Activated naive CD4-positive, alpha-beta T cell treated with anti-CD3 and anti-CD28 coated beads for 36 hours (primary cell): ENCODE measurements at regions of chr9 and their contacts with region 1.

Region 1: DNA sequence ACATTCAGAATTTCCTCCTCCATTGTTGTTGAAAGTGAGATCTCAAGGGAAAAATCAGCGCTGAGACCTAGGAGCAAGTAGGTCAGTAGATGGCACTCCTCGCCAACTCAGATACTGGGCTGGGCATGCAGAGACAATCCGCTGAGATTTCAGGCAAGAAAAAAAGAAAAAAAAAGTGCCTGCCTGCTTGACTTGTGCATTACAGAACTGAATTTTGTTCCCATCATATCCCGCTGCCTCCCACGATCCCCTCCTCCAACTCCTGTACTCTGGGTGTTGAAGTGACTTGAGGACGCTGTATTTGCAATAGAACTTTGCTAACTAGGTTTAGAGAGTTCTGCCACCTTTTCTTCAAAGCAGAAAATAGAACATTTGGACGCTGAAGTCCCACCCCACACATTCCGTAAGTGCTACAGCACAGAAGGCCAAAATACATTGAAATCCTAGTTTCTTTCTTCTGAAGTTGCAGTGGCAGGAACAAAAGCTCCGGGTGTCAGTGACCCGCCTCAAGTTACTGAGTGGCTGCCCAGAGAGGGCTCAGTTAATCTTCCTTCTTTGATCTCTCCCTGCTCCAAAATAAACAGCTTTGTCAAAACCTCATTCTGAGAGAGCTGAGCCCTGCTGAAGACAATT is 265.8 kb downstream of the MLLT3 start:
- DNase-seq: peak; percentile 85
- H3K4me3 Mint-ChIP-seq: no peak overlapping the region
- H3K27ac Mint-ChIP-seq: peak overlapping the region; percentile 46
- H3K4me1 Mint-ChIP-seq: peaks cover 72% of the 10 kb centered on the region
- H3K27me3 Mint-ChIP-seq: no peaks in the 10 kb centered on the region

Region 2: GRCh38 chr9:19925817-19926503 is 430.6 kb before region 1 on chr9:
- CTCF ChIA-PET with region 1: interaction called, 6 read pairs
- intact Hi-C with region 1: loop called (anchors 1 kb)
- DNase-seq: peak; percentile 90
- H3K4me3 Mint-ChIP-seq: peak overlapping the region; percentile 57
- H3K27ac Mint-ChIP-seq: no peak overlapping the region
- H3K4me1 Mint-ChIP-seq: peaks cover 18% of the 10 kb centered on the region
- H3K27me3 Mint-ChIP-seq: peaks cover 2% of the 10 kb centered on the region

Region 3: DNA sequence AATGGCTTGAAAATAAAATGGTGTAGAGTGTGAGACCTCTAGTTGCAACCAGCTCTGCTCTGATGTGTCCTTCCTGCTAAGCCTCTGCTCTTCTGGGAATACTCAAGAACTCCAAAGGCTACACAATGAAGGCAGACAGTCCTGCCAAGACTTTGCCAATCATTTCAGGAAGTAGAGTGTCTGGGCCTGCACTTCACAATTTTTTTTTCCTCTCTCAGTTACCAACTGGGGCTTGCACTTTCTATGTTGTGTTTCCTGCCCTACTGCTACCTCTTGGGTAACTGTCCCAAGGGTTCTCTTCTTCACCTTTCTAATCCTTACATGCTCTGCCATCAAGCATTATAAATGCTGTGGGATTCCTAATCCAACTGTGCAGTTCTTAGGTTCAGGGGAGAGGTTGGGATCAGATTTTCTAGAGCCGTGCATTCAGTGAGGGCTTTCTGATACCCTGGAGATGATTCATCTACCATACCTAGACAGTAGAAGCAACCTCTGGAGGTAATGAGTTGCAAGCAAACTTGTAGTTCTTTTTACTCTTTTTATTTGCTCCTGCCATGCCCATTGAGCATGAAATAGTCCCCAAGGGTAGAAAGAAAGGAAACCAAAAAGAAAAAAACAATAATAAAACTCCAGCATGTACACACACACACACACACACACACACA is 100.1 kb before region 1 on chr9:
- CTCF ChIA-PET with region 1: interaction called, 7 read pairs
- intact Hi-C with region 1: loop called (anchors 2 kb)
- DNase-seq: no peak
- H3K4me3 Mint-ChIP-seq: no peak overlapping the region
- H3K27ac Mint-ChIP-seq: no peak overlapping the region
- H3K4me1 Mint-ChIP-seq: peaks cover 38% of the 10 kb centered on the region
- H3K27me3 Mint-ChIP-seq: no peaks in the 10 kb centered on the region

Region 4: GRCh38 chr9:20289423-20290010 is 67.0 kb before region 1 on chr9:
- CTCF ChIA-PET with region 1: no interaction called
- intact Hi-C with region 1: no loop called
- DNase-seq: no peak
- H3K4me3 Mint-ChIP-seq: no peak overlapping the region
- H3K27ac Mint-ChIP-seq: no peak overlapping the region
- H3K4me1 Mint-ChIP-seq: peaks cover 27% of the 10 kb centered on the region
- H3K27me3 Mint-ChIP-seq: no peaks in the 10 kb centered on the region

Region 5: DNA sequence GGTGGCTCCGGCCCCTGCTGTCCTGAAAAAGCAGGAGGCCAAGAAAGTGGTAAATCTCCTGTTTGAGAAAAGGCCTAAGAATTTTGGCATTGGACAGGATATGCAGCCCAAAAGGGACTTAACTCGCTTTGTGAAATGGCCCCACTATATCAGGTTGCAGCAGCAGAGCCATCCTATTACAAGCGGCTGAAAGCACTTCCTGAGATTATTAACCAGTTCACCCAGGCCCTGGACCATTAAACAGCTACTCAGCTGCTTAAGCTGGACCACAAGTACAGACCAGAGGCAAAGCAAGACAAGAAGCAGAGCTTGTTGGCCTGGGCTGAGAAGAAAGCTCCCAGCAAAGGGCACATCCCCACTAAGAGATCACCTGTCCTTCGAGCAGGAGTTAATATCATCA is 176.1 kb after region 1 on chr9:
- CTCF ChIA-PET with region 1: no interaction called
- intact Hi-C with region 1: no loop called
- DNase-seq: no peak
- H3K4me3 Mint-ChIP-seq: no peak overlapping the region
- H3K27ac Mint-ChIP-seq: no peak overlapping the region
- H3K4me1 Mint-ChIP-seq: peaks cover 68% of the 10 kb centered on the region
- H3K27me3 Mint-ChIP-seq: no peaks in the 10 kb centered on the region

Region 6: GRCh38 chr9:20684035-20684872 is 327.7 kb after region 1 on chr9 and contains the start of gene FOCAD:
- CTCF ChIA-PET with region 1: interaction called, 3 read pairs
- intact Hi-C with region 1: loop called (anchors 1 kb)
- DNase-seq: peak; percentile 95
- H3K4me3 Mint-ChIP-seq: peak within 1 kb of the TSS; percentile 88
- H3K27ac Mint-ChIP-seq: peak within 1 kb of the TSS; percentile 76
- H3K4me1 Mint-ChIP-seq: peaks cover 17% of the 10 kb centered on the region
- H3K27me3 Mint-ChIP-seq: no peaks in the 10 kb centered on the region
- total RNA-seq, gene FOCAD: 31.7 to 32.2 TPM

Region 7: DNA sequence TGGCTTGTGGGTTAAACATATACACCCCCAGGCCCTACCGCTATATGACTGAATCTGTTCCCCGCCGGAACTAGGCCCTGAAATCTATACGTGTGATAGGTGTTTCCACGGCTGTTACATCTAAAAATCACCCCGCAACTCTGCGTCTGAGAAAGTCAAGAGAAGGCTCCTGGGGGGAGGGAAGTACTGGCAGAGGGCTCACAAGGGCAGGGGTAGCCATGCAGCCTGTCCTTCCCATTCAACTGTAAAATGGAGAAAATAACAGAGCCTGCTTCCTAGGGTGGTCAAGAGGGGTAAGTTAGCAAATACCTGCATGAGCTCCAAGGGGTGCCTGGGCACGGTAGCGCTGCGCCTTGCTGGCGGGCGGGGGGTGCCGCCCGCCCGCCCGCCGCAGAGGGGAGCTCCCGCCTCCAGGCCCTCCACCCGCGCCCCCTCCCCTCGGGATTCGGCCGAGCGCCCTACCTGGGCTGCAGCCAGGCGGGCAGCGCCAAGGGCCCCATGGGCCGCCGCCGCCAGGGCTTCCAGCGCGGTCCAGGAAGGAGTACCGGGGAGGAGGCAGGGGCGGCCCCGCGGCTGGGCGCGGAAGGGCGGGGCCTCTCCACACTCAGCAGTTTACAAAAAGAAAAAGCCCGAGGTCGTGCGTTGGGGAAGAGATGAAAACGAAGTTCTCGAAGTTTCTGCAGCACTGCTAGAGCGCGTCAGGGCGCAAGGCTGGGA is 674.7 kb after region 1 on chr9 and contains the start of gene HACD4:
- CTCF ChIA-PET with region 1: no interaction called
- intact Hi-C with region 1: loop called (anchors 2 kb)
- DNase-seq: peak; percentile 78
- H3K4me3 Mint-ChIP-seq: peak within 1 kb of the TSS; percentile 49
- H3K27ac Mint-ChIP-seq: peak within 1 kb of the TSS; percentile 69
- H3K4me1 Mint-ChIP-seq: peaks cover 25% of the 10 kb centered on the region
- H3K27me3 Mint-ChIP-seq: no peaks in the 10 kb centered on the region
- total RNA-seq, gene HACD4: 1.1 to 1.6 TPM